Natural killer cell (primary cell): ENCODE measurements at regions of chr11 and their contacts with region 1.

Region 1: DNA sequence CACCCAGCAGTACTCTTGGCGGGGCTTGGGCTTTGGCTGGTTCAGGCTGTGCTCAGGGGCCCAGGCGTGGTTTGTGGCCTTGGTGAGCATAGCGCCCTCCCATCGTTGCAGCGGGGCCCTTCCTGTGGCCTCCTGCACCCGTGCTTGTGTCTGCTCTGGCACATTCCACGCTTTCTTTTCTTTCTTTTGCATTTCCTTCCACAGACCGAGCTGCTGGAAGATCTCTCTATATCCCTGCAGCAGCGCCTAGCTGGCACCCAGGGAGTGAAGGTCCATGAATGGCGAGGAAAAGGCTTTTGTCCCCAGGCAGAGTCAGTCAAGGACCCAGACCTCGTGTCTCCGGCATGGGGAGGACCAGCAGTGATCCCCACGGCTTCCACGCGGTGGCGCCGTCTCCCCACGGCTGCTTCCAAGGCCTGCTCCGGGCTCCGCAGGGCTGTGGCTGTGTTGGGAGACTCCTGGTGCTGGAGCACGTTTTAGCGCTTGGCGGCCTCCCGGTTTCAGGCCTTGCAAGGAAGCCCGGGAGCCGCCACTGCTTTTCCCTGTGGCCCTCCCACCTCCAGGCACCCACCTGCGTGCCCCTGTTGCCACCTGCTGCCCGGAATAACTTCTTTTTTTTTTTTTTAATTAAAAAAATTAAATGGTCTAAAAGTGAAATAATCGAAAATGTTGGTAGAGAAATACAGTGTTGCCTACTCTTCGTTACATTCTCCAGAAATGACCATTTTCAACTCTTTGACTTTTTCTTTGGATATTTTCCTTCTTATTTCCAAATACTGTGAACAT is 28.5 kb downstream of the GLB1L2 start:
- DNase-seq: peak; percentile 79 to 82
- ATAC-seq: peak; percentile 86 to 99 (median 99)
- H3K4me3 ChIP-seq: no peak overlapping the region
- H3K4me3 Mint-ChIP-seq: peak overlapping the region; percentile 64
- H3K27ac ChIP-seq: no peak overlapping the region
- H3K27ac Mint-ChIP-seq: peak overlapping the region; percentile 43 to 80
- H3K4me1 ChIP-seq: peaks cover 12% of the 10 kb centered on the region
- H3K4me1 Mint-ChIP-seq: peaks cover 10 to 21% of the 10 kb centered on the region in 2 donors
- H3K27me3 ChIP-seq: no peaks in the 10 kb centered on the region
- H3K27me3 Mint-ChIP-seq: peaks cover 13 to 38% of the 10 kb centered on the region in 2 donors
- CTCF ChIP-seq: peak; percentile 96

Region 2: DNA sequence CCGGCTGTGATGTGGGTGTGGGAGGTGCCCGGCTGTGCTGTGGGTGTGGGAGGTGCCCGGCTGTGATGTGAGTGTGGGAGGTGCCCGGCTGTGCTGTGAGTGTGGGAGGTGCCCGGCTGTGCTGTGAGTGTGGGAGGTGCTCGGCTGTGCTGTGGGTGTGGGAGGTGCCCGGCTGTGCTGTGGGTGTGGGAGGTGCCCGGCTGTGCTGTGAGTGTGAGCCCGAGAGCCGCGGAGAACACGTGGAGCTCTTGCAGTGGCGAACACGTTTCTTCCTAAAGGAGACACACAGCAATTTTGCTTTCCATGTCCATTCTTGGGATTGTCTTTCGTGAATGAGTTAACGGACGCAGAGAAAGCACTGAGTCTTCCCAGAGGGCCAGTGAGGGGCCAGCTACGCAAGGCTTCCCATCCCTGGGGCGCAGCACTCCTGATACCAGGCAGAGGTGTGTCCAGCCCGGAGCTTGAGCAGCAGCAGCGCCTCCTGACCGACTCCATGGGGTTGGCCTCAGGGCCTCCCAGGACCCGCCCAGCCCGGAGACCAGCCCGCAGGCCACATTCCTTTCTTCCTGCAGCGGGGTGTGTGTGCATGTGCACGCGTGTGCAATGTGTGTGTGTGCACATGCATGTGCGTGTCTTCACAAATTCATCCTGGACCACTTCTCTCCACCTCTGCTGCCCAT is 296.8 kb after region 1 on chr11:
- intact Hi-C with region 1: loop called (anchors 5 kb)
- DNase-seq: peak; percentile 13 to 49
- ATAC-seq: no peak
- H3K4me3 ChIP-seq: no peak overlapping the region
- H3K4me3 Mint-ChIP-seq: no peak overlapping the region
- H3K27ac ChIP-seq: no peak overlapping the region
- H3K27ac Mint-ChIP-seq: no peak overlapping the region
- H3K4me1 ChIP-seq: peaks cover 4% of the 10 kb centered on the region
- H3K4me1 Mint-ChIP-seq: peaks cover 5 to 7% of the 10 kb centered on the region in 2 donors
- H3K27me3 ChIP-seq: no peaks in the 10 kb centered on the region
- H3K27me3 Mint-ChIP-seq: peaks cover 20 to 23% of the 10 kb centered on the region in 2 donors
- CTCF ChIP-seq: no peak

Region 3: GRCh38 chr11:134725716-134726639 is 365.7 kb after region 1 on chr11:
- intact Hi-C with region 1: loop called (anchors 5 kb)
- DNase-seq: no peak
- ATAC-seq: no peak
- H3K4me3 ChIP-seq: no peak overlapping the region
- H3K4me3 Mint-ChIP-seq: no peak overlapping the region
- H3K27ac ChIP-seq: no peak overlapping the region
- H3K27ac Mint-ChIP-seq: no peak overlapping the region
- H3K4me1 ChIP-seq: no peaks in the 10 kb centered on the region
- H3K4me1 Mint-ChIP-seq: no peaks in the 10 kb centered on the region
- H3K27me3 ChIP-seq: no peaks in the 10 kb centered on the region
- H3K27me3 Mint-ChIP-seq: peaks cover 22 to 26% of the 10 kb centered on the region in 2 donors
- CTCF ChIP-seq: no peak